Gastrocnemius medialis (tissue), 4 donors: ENCODE measurements at regions of chr7 and their contacts with region 1.

Region 1: DNA sequence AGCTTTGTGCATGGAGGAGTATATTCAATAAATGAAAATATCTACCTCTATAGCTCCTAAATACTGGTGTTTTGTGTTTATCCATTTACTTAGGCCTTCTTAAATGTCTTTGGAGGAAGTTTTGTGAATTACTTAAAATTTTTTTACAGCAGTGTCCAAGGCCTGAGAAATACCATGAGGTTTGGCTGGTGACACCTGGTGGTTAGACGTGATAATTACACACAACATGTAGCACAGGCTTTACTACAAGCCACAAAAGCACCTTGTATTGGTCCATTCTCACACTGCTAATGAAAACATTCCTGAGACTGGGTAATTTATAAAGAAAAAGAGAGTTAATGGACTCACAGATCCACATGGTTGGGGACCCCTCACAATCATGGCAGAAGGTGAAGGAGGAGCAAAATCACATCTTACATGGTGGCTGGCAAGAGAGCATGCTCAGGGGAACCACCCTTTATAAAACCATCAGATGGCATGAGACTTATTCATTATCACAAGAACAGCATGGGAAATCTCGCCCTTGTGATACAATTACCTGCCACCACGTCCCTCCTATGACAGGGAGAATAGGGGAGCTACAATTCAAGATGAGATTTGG is 20.6 kb downstream of the HYAL4 start:
- DNase-seq: peak; percentile 23 to 26
- ATAC-seq: peak; percentile 90 to 92
- H3K4me3 ChIP-seq: no peak overlapping the region
- H3K27ac ChIP-seq: peak overlapping the region in 1 of 4 donors; percentile 31
- H3K4me1 ChIP-seq: peaks cover 10 to 22% of the 10 kb centered on the region in 2 donors
- H3K27me3 ChIP-seq: no peaks in the 10 kb centered on the region
- CTCF ChIP-seq: peak; percentile 69 to 82 (median 75)
- POLR2A ChIP-seq: no peak

Region 2: GRCh38 chr7:123570401-123571182 is 295.0 kb before region 1 on chr7:
- in situ Hi-C with region 1: loop called in 2 of 4 experiments (anchors 10 to 25 kb)
- intact Hi-C with region 1: no loop called
- DNase-seq: no peak
- ATAC-seq: no peak
- H3K4me3 ChIP-seq: no peak overlapping the region
- H3K27ac ChIP-seq: no peak overlapping the region
- H3K4me1 ChIP-seq: peaks cover 4 to 6% of the 10 kb centered on the region in 2 donors
- H3K27me3 ChIP-seq: no peaks in the 10 kb centered on the region
- CTCF ChIP-seq: no peak
- POLR2A ChIP-seq: no peak

Region 3: GRCh38 chr7:123635551-123636359 is 229.9 kb before region 1 on chr7:
- in situ Hi-C with region 1: loop called in 1 of 4 experiments (anchors 5 kb)
- intact Hi-C with region 1: loop called (anchors 2 kb)
- DNase-seq: no peak
- ATAC-seq: peak; percentile 57 to 71
- H3K4me3 ChIP-seq: no peak overlapping the region
- H3K27ac ChIP-seq: peak overlapping the region in 3 of 4 donors; percentile 67 to 83 (median 79)
- H3K4me1 ChIP-seq: peaks cover 49 to 52% of the 10 kb centered on the region in 2 donors
- H3K27me3 ChIP-seq: no peaks in the 10 kb centered on the region
- CTCF ChIP-seq: peak; percentile 25 to 69 (median 54)
- POLR2A ChIP-seq: no peak

Region 4: GRCh38 chr7:123797673-123798527 is 67.7 kb before region 1 on chr7:
- in situ Hi-C with region 1: loop called in 3 of 4 experiments (anchors 5 to 10 kb)
- intact Hi-C with region 1: loop called (anchors 2 kb)
- DNase-seq: no peak
- ATAC-seq: peak; percentile 93 to 96
- H3K4me3 ChIP-seq: peak overlapping the region in 1 of 4 donors; percentile 28
- H3K27ac ChIP-seq: peak overlapping the region; percentile 44 to 83 (median 62)
- H3K4me1 ChIP-seq: peaks cover 0 to 15% of the 10 kb centered on the region in 2 donors
- H3K27me3 ChIP-seq: no peaks in the 10 kb centered on the region
- CTCF ChIP-seq: peak in 4 of 5 experiments; percentile 46 to 84 (median 66)
- POLR2A ChIP-seq: no peak